Activated CD8-positive, alpha-beta memory T cell treated with anti-CD3 and anti-CD28 coated beads, Interleukin-2, amount 10 ng/mL, durations not matched to agents 7 days and 5 days (primary cell): ENCODE measurements at regions of chr19 and their contacts with region 1.

Region 1: DNA sequence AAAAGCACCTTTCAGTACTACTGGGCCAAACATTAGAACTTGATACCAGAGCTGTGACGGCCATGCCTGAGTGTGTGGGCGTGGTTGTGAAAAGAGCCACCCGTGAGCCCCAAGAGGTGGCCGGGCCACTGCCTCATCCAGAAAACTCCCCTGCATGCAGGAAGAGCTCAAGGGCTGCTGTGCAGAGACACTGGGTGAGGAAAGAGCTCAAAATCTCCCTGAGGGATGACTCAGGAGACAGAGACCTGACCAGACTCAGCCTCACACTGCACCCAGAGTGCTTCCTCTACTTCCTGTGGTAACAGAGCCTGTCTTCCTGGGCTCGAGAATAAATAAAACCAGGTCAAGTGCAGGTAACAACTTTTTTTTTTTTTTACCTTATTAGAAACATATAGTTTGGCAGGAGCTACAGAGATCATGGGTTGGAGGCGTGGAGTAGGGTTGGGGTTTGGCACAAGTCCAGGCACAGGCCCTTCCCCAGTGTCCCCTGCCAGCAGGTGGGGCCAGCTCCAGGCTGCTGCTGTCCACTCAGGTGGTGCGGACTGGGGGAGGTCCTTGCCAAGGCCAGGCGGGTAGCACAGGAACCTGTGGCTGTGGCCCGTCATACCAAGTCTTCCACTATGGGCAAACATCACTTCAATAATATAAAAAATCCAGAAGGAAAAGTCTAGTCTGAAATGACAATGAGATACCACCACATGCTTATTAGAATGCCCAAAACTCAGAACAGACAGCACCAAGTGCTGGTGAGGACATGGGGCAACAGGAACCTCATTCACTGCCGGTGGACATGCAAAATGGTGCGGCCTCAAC is 25.5 kb downstream of the ELL start:
- DNase-seq: peak; percentile 83
- ATAC-seq: peak; percentile 83
- H3K4me3 Mint-ChIP-seq: peak overlapping the region; percentile 57
- H3K27ac Mint-ChIP-seq: peak overlapping the region; percentile 95
- H3K4me1 Mint-ChIP-seq: peaks cover 81% of the 10 kb centered on the region
- H3K27me3 Mint-ChIP-seq: no peaks in the 10 kb centered on the region

Region 2: GRCh38 chr19:18328340-18329034 is 167.9 kb before region 1 on chr19:
- CTCF ChIA-PET with region 1: no interaction called
- DNase-seq: peak; percentile 95
- ATAC-seq: peak; percentile 100
- H3K4me3 Mint-ChIP-seq: peak overlapping the region; percentile 66
- H3K27ac Mint-ChIP-seq: peak overlapping the region; percentile 29
- H3K4me1 Mint-ChIP-seq: peaks cover 23% of the 10 kb centered on the region
- H3K27me3 Mint-ChIP-seq: no peaks in the 10 kb centered on the region

Region 3: DNA sequence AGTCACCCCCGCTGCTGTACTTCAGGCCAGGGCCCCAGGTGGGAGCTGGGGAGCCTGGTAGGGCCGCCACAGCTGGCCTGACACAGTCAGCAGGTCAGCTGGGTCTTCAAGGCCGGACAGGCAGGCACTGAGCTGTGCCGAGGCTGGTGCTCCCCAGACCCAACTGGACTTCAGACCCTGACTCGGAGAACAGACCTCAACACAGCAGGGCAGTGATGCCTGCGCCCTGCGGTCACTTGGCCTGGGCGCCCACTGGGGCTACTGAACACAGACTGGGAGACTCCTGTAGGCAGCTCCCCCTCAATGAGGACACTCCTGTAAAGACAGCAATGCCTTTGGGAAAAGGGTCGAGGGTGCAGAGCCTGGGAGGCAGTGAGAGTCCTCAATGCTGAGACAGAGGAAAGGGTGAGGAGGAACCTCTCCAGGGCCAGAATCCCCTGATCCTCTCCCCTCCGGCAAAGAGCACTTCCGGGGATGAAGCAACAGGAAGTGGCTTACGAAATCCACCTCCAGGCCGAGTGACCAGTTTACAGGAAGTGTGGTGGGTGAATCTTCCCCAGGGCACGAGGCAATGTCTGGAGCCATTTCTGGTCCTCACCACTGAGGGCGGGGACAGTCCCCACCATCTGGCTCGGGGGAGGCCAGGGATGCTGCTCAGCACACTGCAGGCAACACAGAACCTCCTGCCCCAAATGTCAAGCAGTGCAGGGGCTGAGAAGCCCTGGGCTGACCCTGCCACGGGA is 17.6 kb before region 1 on chr19:
- CTCF ChIA-PET with region 1: interaction called, 17 read pairs
- DNase-seq: peak; percentile 84
- ATAC-seq: peak; percentile 57
- H3K4me3 Mint-ChIP-seq: no peak overlapping the region
- H3K27ac Mint-ChIP-seq: peak overlapping the region; percentile 86
- H3K4me1 Mint-ChIP-seq: peaks cover 91% of the 10 kb centered on the region
- H3K27me3 Mint-ChIP-seq: no peaks in the 10 kb centered on the region

Region 4: DNA sequence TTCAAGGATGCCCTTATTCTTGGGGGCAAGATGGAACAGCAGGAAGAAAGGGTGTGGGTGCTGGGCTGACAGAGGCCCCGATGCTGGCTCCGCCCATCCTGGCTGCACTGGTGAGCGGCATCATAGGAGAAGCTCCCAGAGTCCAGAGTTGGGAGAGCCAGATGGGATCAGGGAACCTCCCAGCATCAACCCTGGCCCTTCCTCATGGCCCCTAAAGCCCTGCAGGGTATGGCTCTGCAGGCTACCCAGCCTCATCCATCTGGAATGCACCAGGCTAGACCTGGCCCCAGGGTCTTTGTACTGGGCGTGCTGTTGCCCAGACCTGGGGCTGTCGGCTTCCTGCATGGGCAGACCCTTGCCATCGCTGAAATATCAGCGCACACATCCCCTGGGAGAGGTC is 33.4 kb after region 1 on chr19:
- CTCF ChIA-PET with region 1: no interaction called
- DNase-seq: no peak
- ATAC-seq: no peak
- H3K4me3 Mint-ChIP-seq: no peak overlapping the region
- H3K27ac Mint-ChIP-seq: no peak overlapping the region
- H3K4me1 Mint-ChIP-seq: no peaks in the 10 kb centered on the region
- H3K27me3 Mint-ChIP-seq: no peaks in the 10 kb centered on the region

Region 5: DNA sequence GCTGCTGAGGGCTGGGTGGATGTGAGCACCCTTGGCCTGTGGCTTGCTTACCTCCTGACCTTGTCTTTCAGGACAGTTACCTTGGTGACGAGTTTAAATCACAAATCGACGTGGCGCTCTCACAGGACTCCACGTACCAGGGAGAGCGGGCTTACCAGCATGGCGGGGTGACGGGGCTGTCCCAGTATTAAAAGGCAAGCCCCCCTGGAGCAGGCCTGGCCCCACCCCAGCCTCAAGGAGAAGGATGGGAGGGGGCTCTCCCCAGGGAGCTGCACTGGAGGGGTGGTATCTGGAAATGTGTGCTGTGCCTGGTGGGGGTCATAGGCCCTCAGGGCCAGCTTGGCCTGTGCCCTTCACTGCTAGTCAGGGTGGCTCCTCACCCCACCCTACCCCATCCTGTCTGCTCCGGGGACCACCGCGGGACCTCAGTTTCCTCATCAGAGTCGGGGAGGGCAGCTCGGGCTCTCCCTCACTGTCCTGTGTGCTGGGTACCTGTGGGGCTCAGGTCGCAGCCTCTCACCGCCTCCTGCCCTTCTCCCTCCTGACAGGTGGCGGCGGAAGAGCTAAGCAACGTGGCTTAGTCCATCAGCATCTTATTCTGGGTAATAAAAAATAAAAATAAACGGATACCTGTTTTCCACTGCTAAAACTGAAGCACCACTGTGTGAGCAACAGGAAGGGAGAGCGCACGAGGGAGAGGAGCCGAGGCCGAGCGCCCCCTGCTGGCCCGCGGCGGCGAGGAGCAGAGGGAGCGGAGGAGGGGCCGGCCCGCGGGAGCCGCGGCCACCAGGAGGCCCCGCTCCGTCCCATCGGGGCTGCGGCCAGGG is 369.8 kb after region 1 on chr19:
- CTCF ChIA-PET with region 1: no interaction called
- DNase-seq: peak; percentile 64
- ATAC-seq: peak; percentile 84
- H3K4me3 Mint-ChIP-seq: no peak overlapping the region
- H3K27ac Mint-ChIP-seq: no peak overlapping the region
- H3K4me1 Mint-ChIP-seq: no peaks in the 10 kb centered on the region
- H3K27me3 Mint-ChIP-seq: peaks cover 4% of the 10 kb centered on the region